B cell (primary cell): ENCODE measurements at regions of chr10 and their contacts with region 1.

Region 1: GRCh38 chr10:92790440-92790839 is 57.9 kb upstream of the EXOC6 start:
- DNase-seq: peak; percentile 69
- ATAC-seq: peak; percentile 63
- H3K4me3 ChIP-seq: peak overlapping the region in 1 of 5 experiments; percentile 23
- H3K4me3 Mint-ChIP-seq: peak overlapping the region; percentile 57
- H3K27ac ChIP-seq: peak overlapping the region; percentile 70 to 82
- H3K27ac Mint-ChIP-seq: peak overlapping the region; percentile 92
- H3K4me1 ChIP-seq: peaks cover 44 to 47% of the 10 kb centered on the region in 2 donors
- H3K4me1 Mint-ChIP-seq: peaks cover 40% of the 10 kb centered on the region
- H3K27me3 ChIP-seq: no peaks in the 10 kb centered on the region
- H3K27me3 Mint-ChIP-seq: no peaks in the 10 kb centered on the region
- CTCF ChIP-seq: no peak

Region 2: DNA sequence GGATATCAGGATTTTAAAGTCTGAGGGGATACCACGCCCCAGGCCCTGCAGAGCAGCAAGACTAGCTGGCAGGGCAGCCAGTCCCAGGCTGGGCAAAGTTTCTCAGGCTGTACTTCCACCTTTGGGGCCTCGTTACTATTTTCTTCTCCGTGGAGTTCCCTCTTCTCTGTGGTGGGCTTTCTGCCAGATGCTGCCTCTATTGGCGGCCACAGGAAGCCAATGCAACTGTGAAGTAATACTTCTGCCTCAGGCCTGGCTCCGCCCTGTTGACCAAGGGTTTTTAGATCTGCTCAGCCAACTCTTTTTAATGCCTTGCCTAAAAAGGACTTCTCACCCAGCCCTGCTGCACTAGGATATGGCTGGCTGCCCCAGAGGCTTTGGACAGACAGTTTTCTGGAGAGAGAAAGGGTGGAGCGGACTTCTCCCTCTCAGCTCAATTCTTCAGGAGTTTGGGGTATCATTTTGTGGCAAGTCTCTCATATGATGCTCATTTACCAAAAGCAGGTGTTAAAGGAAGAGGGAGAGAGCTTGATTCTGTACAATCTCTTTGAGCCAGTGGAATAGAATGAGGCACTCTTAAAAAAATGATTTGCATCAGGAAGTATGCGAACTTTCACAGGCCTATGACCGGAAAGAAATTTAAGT is 33.3 kb before region 1 on chr10:
- CTCF ChIA-PET with region 1: interaction called, 4 read pairs
- POLR2A ChIA-PET with region 1: no interaction called
- intact Hi-C with region 1: loop called (anchors 1 kb)
- DNase-seq: peak; percentile 86
- ATAC-seq: peak; percentile 66
- H3K4me3 ChIP-seq: peak overlapping the region; percentile 16 to 36 (median 29)
- H3K4me3 Mint-ChIP-seq: peak overlapping the region; percentile 75
- H3K27ac ChIP-seq: peak overlapping the region; percentile 84 to 87
- H3K27ac Mint-ChIP-seq: peak overlapping the region; percentile 97
- H3K4me1 ChIP-seq: peaks cover 65 to 73% of the 10 kb centered on the region in 2 donors
- H3K4me1 Mint-ChIP-seq: peaks cover 75% of the 10 kb centered on the region
- H3K27me3 ChIP-seq: no peaks in the 10 kb centered on the region
- H3K27me3 Mint-ChIP-seq: no peaks in the 10 kb centered on the region
- CTCF ChIP-seq: peak; percentile 42

Region 3: DNA sequence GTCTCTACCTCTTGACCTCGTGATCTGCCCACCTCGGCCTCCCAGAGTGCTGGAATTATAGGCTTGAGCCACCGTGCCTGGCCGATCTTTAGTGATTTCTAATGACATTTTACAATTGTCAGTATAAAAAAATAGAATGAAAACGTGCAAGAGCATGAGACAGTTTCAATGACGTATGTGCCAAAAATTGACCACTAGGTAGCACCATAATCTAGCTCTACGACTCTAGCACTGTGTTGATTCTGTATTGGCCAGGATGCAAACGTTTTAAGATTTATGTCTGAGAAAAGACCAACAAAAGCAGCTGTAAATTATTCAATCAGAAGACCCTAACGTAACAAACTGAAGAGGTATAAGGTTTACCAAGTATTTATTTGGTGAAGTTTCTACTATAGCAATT is 32.5 kb after region 1 on chr10:
- CTCF ChIA-PET with region 1: no interaction called
- POLR2A ChIA-PET with region 1: no interaction called
- intact Hi-C with region 1: no loop called
- DNase-seq: peak; percentile 52
- ATAC-seq: peak; percentile 45
- H3K4me3 ChIP-seq: no peak overlapping the region
- H3K4me3 Mint-ChIP-seq: no peak overlapping the region
- H3K27ac ChIP-seq: no peak overlapping the region
- H3K27ac Mint-ChIP-seq: no peak overlapping the region
- H3K4me1 ChIP-seq: peaks cover 4 to 15% of the 10 kb centered on the region in 2 donors
- H3K4me1 Mint-ChIP-seq: peaks cover 28% of the 10 kb centered on the region
- H3K27me3 ChIP-seq: no peaks in the 10 kb centered on the region
- H3K27me3 Mint-ChIP-seq: no peaks in the 10 kb centered on the region
- CTCF ChIP-seq: peak; percentile 27

Region 4: GRCh38 chr10:92839191-92840085 is 49.0 kb after region 1 on chr10:
- CTCF ChIA-PET with region 1: interaction called, 10 read pairs
- POLR2A ChIA-PET with region 1: no interaction called
- intact Hi-C with region 1: loop called (anchors 5 kb)
- DNase-seq: peak; percentile 36
- ATAC-seq: peak; percentile 36
- H3K4me3 ChIP-seq: no peak overlapping the region
- H3K4me3 Mint-ChIP-seq: no peak overlapping the region
- H3K27ac ChIP-seq: no peak overlapping the region
- H3K27ac Mint-ChIP-seq: no peak overlapping the region
- H3K4me1 ChIP-seq: no peaks in the 10 kb centered on the region
- H3K4me1 Mint-ChIP-seq: peaks cover 4% of the 10 kb centered on the region
- H3K27me3 ChIP-seq: no peaks in the 10 kb centered on the region
- H3K27me3 Mint-ChIP-seq: no peaks in the 10 kb centered on the region
- CTCF ChIP-seq: peak; percentile 33